ENCODE measurements at regions of chr6 and their contacts with region 1.

Region 1: GRCh38 chr6:132813173-132813856 is 1.1 kb upstream of the RPS12 start:
- DNase-seq: no peak
- H3K4me3 ChIP-seq: peak overlapping the region; percentile 87
- H3K27ac ChIP-seq: peak overlapping the region; percentile 65
- H3K27me3 ChIP-seq: peaks cover 3% of the 10 kb centered on the region
- CTCF ChIP-seq: no peak

Region 2: DNA sequence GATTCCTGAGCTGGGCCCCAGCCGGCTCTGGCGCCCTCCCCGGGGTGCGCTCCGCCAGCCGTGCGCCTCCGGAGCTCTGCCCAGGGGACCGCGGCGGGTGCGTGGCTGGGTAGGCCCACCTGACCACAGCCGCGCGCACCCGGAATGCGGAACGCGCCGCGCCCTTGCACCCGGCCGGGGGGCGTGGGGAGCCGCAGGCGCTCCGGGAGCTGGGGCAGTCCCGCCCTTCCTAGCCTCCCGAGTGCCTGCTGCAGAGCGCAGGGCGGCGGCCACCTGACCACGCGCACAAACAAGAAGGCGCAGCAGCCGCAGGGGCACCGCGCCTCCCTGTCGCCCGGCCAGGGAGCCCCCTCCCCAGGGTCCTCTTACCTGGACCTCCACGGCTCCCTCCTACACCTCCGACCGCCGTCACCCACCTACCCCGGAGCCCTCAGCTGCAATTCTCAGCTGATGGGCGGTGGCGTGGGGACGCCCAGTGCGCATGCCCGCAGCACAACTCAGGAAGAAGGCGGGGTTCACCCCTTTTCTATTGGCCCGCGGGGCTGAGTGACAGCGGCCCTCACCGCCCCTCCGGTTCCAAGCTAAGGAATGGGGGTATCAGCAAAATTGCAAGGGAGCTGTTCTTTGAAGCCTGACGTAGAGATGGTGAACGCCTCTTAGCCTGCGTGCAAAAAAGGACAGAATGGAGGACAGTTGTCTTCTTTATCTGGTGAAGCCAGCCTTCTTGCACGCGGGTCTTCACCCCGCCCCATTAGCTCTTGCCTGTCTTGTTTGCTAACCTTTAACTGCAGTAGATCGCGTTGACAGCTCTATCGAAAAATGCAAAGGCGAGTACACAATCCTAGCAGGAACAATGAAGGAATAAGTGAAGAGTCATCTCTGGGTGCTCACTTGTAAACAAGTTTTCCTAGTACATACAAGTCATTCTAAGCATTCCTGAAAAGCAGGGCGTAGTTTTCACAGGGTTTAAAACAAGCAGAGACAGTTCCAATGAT is 300.4 kb before region 1 on chr6 and contains the start of gene STX7:
- CTCF ChIA-PET with region 1: no interaction called
- POLR2A ChIA-PET with region 1: interaction called, 11 read pairs
- DNase-seq: peak; percentile 52
- H3K4me3 ChIP-seq: peak within 1 kb of the TSS; percentile 80
- H3K27ac ChIP-seq: peak within 1 kb of the TSS; percentile 25
- H3K27me3 ChIP-seq: peaks cover 3% of the 10 kb centered on the region
- CTCF ChIP-seq: no peak
- polyA plus RNA-seq, gene STX7: 37.0 and 42.7 TPM in 2 replicates

Measured in AG04450 (cell line).